ENCODE measurements at regions of chr3 and their contacts with region 1.

Region 1: DNA sequence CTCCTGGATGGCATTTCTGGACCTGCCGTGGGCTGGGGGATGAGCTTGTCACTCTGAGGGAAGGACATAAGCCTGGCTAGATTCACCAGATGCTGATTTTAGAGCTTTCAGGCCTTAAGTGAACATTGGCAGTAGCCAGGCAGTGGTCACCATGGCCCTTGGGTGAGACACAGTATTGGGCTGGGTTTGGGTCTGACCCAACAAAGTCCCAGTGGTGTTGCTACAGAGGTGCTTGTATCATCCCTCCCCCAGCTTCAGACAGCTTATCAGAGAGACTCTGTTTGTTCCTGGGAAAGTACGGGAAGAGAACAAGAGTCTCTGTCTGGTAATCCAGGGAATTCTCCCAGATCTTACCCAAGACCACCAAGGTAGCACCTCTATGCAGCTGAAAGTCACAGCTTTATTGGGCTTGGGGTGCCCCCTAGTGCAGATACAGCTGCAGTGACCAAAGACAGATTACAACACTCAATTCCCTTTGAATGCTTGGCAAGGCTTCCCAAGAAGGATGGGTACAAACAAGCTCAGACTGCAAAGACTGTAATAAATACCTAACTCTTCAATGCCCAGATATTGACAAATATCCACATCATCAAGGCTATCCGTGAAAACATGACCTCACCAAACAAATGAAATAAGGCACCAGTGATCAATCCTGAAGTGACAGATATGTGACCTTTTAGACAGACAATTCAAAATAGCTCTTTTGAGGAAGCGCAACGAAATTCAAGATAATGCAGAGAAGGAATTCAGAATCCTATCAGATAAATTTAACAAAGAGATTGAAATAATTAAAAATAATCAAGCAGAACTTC is 9.9 kb upstream of the RUVBL1 start:
- DNase-seq: peak; percentile 18 to 75 (median 57)
- ATAC-seq: peak; percentile 77
- H3K4me3 ChIP-seq: no peak overlapping the region
- H3K4me3 Mint-ChIP-seq: no peak overlapping the region
- H3K27ac ChIP-seq: no peak overlapping the region
- H3K27ac Mint-ChIP-seq: no peak overlapping the region
- H3K4me1 ChIP-seq: no peaks in the 10 kb centered on the region
- H3K4me1 Mint-ChIP-seq: no peaks in the 10 kb centered on the region
- H3K27me3 ChIP-seq: no peaks in the 10 kb centered on the region
- H3K27me3 Mint-ChIP-seq: peaks cover 3% of the 10 kb centered on the region
- CTCF ChIP-seq: peak; percentile 58

Region 2: GRCh38 chr3:128089135-128089534 is 44.3 kb before region 1 on chr3:
- CTCF ChIA-PET with region 1: interaction called, 137 read pairs
- POLR2A ChIA-PET with region 1: no interaction called
- intact Hi-C with region 1: no loop called
- DNase-seq: no peak
- ATAC-seq: no peak
- H3K4me3 ChIP-seq: no peak overlapping the region
- H3K4me3 Mint-ChIP-seq: no peak overlapping the region
- H3K27ac ChIP-seq: no peak overlapping the region
- H3K27ac Mint-ChIP-seq: no peak overlapping the region
- H3K4me1 ChIP-seq: no peaks in the 10 kb centered on the region
- H3K4me1 Mint-ChIP-seq: no peaks in the 10 kb centered on the region
- H3K27me3 ChIP-seq: no peaks in the 10 kb centered on the region
- H3K27me3 Mint-ChIP-seq: no peaks in the 10 kb centered on the region
- CTCF ChIP-seq: no peak

Region 3: GRCh38 chr3:128112357-128112968 is 21.0 kb before region 1 on chr3:
- CTCF ChIA-PET with region 1: interaction called, 26 read pairs
- POLR2A ChIA-PET with region 1: no interaction called
- intact Hi-C with region 1: no loop called
- DNase-seq: peak in 7 of 9 experiments; percentile 24 to 86 (median 61)
- ATAC-seq: peak; percentile 92
- H3K4me3 ChIP-seq: no peak overlapping the region
- H3K4me3 Mint-ChIP-seq: peak overlapping the region; percentile 22
- H3K27ac ChIP-seq: peak overlapping the region; percentile 28 to 84
- H3K27ac Mint-ChIP-seq: peak overlapping the region; percentile 94
- H3K4me1 ChIP-seq: peaks cover 18% of the 10 kb centered on the region
- H3K4me1 Mint-ChIP-seq: peaks cover 48% of the 10 kb centered on the region
- H3K27me3 ChIP-seq: no peaks in the 10 kb centered on the region
- H3K27me3 Mint-ChIP-seq: no peaks in the 10 kb centered on the region
- CTCF ChIP-seq: no peak

Region 4: GRCh38 chr3:128282380-128283196 is 149.1 kb after region 1 on chr3:
- CTCF ChIA-PET with region 1: no interaction called
- POLR2A ChIA-PET with region 1: no interaction called
- intact Hi-C with region 1: no loop called
- DNase-seq: no peak
- ATAC-seq: no peak
- H3K4me3 ChIP-seq: no peak overlapping the region
- H3K4me3 Mint-ChIP-seq: no peak overlapping the region
- H3K27ac ChIP-seq: no peak overlapping the region
- H3K27ac Mint-ChIP-seq: no peak overlapping the region
- H3K4me1 ChIP-seq: no peaks in the 10 kb centered on the region
- H3K4me1 Mint-ChIP-seq: peaks cover 19% of the 10 kb centered on the region
- H3K27me3 ChIP-seq: no peaks in the 10 kb centered on the region
- H3K27me3 Mint-ChIP-seq: no peaks in the 10 kb centered on the region
- CTCF ChIP-seq: no peak